ENCODE measurements at regions of chr12 and their contacts with region 1.

Region 1: GRCh38 chr12:1939801-1940607 is 21.6 kb upstream of the CACNA2D4 start:
- DNase-seq: peak; percentile 83 to 93 (median 89)
- H3K4me3 ChIP-seq: no peak overlapping the region
- H3K27ac ChIP-seq: no peak overlapping the region
- H3K4me1 ChIP-seq: peaks cover 0 to 3% (median 2%) of the 10 kb centered on the region in 4 experiments
- H3K27me3 ChIP-seq: no peaks in the 10 kb centered on the region

Region 2: GRCh38 chr12:1650260-1650977 is 289.6 kb before region 1 on chr12:
- CTCF ChIA-PET with region 1: interaction called, 16 read pairs
- POLR2A ChIA-PET with region 1: no interaction called
- DNase-seq: no peak
- H3K4me3 ChIP-seq: no peak overlapping the region
- H3K27ac ChIP-seq: no peak overlapping the region
- H3K4me1 ChIP-seq: peaks cover 2 to 10% (median 6%) of the 10 kb centered on the region in 4 experiments
- H3K27me3 ChIP-seq: no peaks in the 10 kb centered on the region

Region 3: DNA sequence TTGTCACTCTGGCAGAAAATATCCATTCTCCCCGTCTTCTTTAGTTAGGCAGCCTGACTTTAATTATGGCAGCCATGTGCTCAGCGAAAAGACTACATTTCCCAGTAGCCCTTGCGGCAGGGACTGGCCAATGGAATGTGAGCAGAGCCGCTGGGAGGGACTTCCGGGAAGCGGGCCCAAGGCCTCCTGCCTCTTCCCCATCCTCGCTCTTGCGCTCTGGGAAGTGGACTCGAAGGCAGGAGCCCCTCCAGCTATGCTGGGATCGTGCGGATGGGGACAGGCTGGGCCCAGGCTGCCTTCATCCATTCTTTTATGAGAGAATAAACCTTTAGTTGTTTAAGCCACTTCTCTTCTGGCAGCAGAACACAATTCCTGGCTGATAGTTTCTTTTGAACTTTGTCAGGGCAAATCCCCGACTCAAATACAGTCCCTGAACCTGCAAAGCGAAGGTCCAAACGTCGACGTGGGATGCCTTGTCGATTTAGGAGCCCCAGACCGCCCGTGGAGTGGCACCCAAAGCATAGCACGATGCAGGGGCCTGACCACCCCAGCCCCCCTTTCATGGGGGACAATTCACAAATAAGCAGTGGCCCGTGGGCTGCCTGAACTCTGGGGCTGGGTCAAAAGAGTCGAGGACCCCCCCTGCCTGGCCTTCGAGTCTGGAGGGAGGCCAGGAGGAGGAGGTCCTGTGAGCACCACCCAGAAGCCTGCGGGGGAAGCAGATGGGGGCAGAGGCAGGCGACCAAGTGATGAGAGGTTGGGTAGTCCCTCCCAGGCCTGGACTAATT is 135.3 kb before region 1 on chr12:
- CTCF ChIA-PET with region 1: interaction called, 36 read pairs
- POLR2A ChIA-PET with region 1: no interaction called
- DNase-seq: peak; percentile 82 to 86 (median 83)
- H3K4me3 ChIP-seq: peak overlapping the region in 1 of 7 experiments; percentile 19
- H3K27ac ChIP-seq: no peak overlapping the region
- H3K4me1 ChIP-seq: peaks cover 0 to 17% (median 1%) of the 10 kb centered on the region in 4 experiments
- H3K27me3 ChIP-seq: no peaks in the 10 kb centered on the region

Region 4: GRCh38 chr12:1927751-1928351 is 12.2 kb before region 1 on chr12:
- CTCF ChIA-PET with region 1: interaction called, 14 read pairs
- POLR2A ChIA-PET with region 1: no interaction called
- DNase-seq: no peak
- H3K4me3 ChIP-seq: no peak overlapping the region
- H3K27ac ChIP-seq: no peak overlapping the region
- H3K4me1 ChIP-seq: peaks cover 0 to 38% (median 19%) of the 10 kb centered on the region in 4 experiments
- H3K27me3 ChIP-seq: no peaks in the 10 kb centered on the region

Region 5: DNA sequence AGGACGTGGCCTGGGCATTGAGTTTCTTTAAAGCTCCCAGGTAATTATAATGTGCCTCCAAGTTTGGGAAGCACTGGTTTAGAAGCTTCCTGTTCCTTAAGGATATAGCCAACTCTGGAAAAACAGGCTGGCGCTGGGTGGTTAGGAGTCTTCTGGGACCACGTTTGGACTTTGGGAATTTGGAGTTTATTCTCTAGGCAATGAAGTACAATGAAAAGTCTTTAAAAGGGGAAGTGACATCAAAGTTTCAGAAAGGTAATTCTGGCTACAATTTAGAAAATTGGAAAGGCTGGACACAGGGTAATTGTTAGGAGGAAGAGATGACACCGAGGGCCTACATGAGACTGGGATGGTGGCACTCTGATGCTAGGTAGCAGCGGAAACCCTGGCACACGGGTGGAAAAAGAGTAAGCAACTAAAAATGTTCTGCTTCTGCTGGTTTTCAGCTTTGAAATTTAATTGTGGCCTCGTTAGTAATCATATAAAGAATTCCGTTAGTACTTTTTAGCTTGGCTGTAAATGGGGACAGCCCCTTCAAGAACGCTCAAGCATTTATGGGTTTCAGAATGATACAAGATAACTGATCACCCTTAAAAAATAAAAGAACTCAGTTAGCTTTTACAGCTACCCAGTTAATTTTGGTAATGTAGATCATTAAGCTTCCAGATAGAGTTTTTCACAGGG is 77.0 kb after region 1 on chr12:
- CTCF ChIA-PET with region 1: no interaction called
- POLR2A ChIA-PET with region 1: no interaction called
- DNase-seq: no peak
- H3K4me3 ChIP-seq: no peak overlapping the region
- H3K27ac ChIP-seq: no peak overlapping the region
- H3K4me1 ChIP-seq: no peaks in the 10 kb centered on the region
- H3K27me3 ChIP-seq: no peaks in the 10 kb centered on the region